ENCODE measurements at regions of chr22 and their contacts with region 1.

Region 1: GRCh38 chr22:44497218-44497904 is 672 bp downstream of the RTL6 start:
- DNase-seq: peak in 3 of 14 experiments; percentile 19 to 56 (median 21)
- ATAC-seq: no peak
- H3K4me3 ChIP-seq: peak overlapping the region; percentile 52
- H3K4me3 Mint-ChIP-seq: peak overlapping the region; percentile 82
- H3K27ac ChIP-seq: no peak overlapping the region
- H3K27ac Mint-ChIP-seq: peak overlapping the region; percentile 79
- H3K4me1 ChIP-seq: peaks cover 57% of the 10 kb centered on the region
- H3K4me1 Mint-ChIP-seq: peaks cover 51% of the 10 kb centered on the region
- H3K27me3 ChIP-seq: peaks cover 0 to 7% of the 10 kb centered on the region in 2 experiments
- H3K27me3 Mint-ChIP-seq: no peaks in the 10 kb centered on the region
- CTCF ChIP-seq: no peak

Region 2: DNA sequence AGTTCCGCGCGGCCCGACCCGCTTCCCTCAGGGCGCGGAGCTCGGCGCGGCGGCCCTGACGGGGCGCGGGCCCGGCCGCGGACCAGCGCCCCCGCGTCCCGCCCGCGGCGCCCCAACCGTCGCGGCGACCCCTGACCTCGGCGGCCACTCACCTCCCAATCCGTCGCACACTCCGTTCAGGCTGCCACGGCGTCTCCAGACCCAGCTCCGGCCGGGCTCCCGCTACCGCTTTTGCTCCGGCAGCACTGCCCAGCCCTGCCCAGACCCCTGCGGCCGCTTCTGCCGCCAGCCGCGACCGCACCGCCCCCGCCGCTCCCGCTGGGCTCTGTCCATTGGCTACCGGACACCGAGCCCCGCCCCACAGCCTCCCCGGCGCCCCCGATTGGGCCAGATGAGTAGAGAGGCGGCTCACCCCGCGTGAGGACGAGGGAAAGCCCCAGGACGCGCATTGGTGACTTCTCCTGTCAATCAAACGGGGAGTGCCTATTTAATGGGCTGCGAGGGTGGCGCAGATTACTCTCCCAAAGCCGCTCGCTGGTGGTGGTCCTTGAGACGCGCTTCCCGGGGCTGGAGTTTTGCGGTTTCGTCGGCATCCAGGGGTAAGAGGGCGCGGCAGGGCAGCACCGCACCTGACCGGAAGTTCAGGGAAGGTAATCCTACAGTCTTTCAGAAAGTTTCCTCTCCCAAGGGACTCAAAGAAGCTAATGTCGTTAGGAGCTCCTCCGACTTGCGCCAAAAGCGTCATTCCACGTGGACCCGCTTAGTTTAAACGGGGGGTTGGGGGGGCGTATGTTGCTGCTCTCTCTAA is 1482.3 kb before region 1 on chr22 and contains the start of gene PACSIN2:
- CTCF ChIA-PET with region 1: no interaction called
- POLR2A ChIA-PET with region 1: no interaction called
- intact Hi-C with region 1: loop called in 1 of 2 experiments (anchors 10 kb)
- DNase-seq: peak; percentile 97 to 99 (median 99)
- ATAC-seq: peak; percentile 97
- H3K4me3 ChIP-seq: peak within 1 kb of the TSS; percentile 91
- H3K4me3 Mint-ChIP-seq: peak within 1 kb of the TSS; percentile 99
- H3K27ac ChIP-seq: peak within 1 kb of the TSS; percentile 75
- H3K27ac Mint-ChIP-seq: peak within 1 kb of the TSS; percentile 98
- H3K4me1 ChIP-seq: peaks cover 23% of the 10 kb centered on the region
- H3K4me1 Mint-ChIP-seq: peaks cover 38% of the 10 kb centered on the region
- H3K27me3 ChIP-seq: no peaks in the 10 kb centered on the region
- H3K27me3 Mint-ChIP-seq: no peaks in the 10 kb centered on the region
- CTCF ChIP-seq: no peak
- total RNA-seq, gene PACSIN2: 23.3 to 25.5 TPM

Region 3: DNA sequence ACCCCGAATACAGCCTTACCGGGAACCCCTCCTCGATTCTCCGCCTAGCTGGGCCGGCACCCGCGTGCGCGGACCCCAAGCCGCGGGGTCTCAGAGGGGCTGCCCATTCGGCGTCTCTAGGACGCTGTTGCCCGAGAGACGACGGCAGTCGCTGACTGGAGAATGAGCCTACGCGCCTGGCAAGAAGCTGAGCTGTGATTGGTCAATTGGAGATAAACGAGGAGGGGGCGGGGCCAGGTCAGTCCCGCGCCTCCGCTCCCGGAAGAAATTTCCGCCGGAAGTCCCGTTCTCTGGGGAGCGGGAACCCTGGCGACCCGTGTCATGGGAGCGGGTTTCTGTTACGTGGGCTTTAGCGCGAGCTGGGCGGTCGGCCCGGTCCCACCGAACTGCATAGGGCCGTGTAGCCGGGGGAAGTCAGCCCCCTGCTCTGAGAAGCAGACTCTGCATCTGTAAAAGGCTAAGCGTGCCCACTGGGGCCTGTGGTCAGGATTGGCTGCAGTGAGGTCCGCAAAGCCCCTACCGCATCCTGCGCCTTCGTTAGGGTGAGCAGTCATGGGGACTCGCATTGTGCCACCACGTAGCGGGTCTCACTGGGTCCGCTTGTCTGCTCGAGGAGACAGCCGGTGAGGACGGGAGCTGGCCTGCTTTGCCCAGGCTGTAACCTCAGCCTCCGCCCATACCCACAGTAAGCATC is 685.1 kb before region 1 on chr22 and contains the start of gene EFCAB6:
- CTCF ChIA-PET with region 1: no interaction called
- POLR2A ChIA-PET with region 1: no interaction called
- intact Hi-C with region 1: loop called in 1 of 2 experiments (anchors 5 kb)
- DNase-seq: peak; percentile 80 to 96 (median 86)
- ATAC-seq: peak; percentile 84
- H3K4me3 ChIP-seq: peak within 1 kb of the TSS; percentile 94
- H3K4me3 Mint-ChIP-seq: peak within 1 kb of the TSS; percentile 96
- H3K27ac ChIP-seq: peak within 1 kb of the TSS; percentile 51 to 59
- H3K27ac Mint-ChIP-seq: peak within 1 kb of the TSS; percentile 88
- H3K4me1 ChIP-seq: peaks cover 17% of the 10 kb centered on the region
- H3K4me1 Mint-ChIP-seq: peaks cover 27% of the 10 kb centered on the region
- H3K27me3 ChIP-seq: no peaks in the 10 kb centered on the region
- H3K27me3 Mint-ChIP-seq: no peaks in the 10 kb centered on the region
- CTCF ChIP-seq: no peak
- total RNA-seq, gene EFCAB6: 0.17 to 0.36 TPM

Region 4: GRCh38 chr22:44455151-44455962 is 42.0 kb before region 1 on chr22:
- CTCF ChIA-PET with region 1: no interaction called
- POLR2A ChIA-PET with region 1: interaction called, 3 read pairs
- intact Hi-C with region 1: loop called (anchors 1 to 5 kb)
- DNase-seq: peak in 13 of 14 experiments; percentile 41 to 91 (median 60)
- ATAC-seq: peak; percentile 77
- H3K4me3 ChIP-seq: no peak overlapping the region
- H3K4me3 Mint-ChIP-seq: peak overlapping the region; percentile 47
- H3K27ac ChIP-seq: peak overlapping the region; percentile 44 to 69
- H3K27ac Mint-ChIP-seq: peak overlapping the region; percentile 94
- H3K4me1 ChIP-seq: peaks cover 66% of the 10 kb centered on the region
- H3K4me1 Mint-ChIP-seq: peaks cover 26% of the 10 kb centered on the region
- H3K27me3 ChIP-seq: no peaks in the 10 kb centered on the region
- H3K27me3 Mint-ChIP-seq: no peaks in the 10 kb centered on the region
- CTCF ChIP-seq: no peak

Region 5: GRCh38 chr22:44625981-44626687 is 128.8 kb after region 1 on chr22:
- CTCF ChIA-PET with region 1: no interaction called
- POLR2A ChIA-PET with region 1: no interaction called
- intact Hi-C with region 1: loop called (anchors 2 to 5 kb)
- DNase-seq: peak; percentile 68 to 90 (median 78)
- ATAC-seq: peak; percentile 91
- H3K4me3 ChIP-seq: no peak overlapping the region
- H3K4me3 Mint-ChIP-seq: no peak overlapping the region
- H3K27ac ChIP-seq: no peak overlapping the region
- H3K27ac Mint-ChIP-seq: no peak overlapping the region
- H3K4me1 ChIP-seq: peaks cover 18% of the 10 kb centered on the region
- H3K4me1 Mint-ChIP-seq: no peaks in the 10 kb centered on the region
- H3K27me3 ChIP-seq: no peaks in the 10 kb centered on the region
- H3K27me3 Mint-ChIP-seq: no peaks in the 10 kb centered on the region
- CTCF ChIP-seq: peak; percentile 96